ENCODE measurements at regions of chr16 and their contacts with region 1.

Region 1: GRCh38 chr16:58451945-58452401 is 48.0 kb upstream of the NDRG4 start:
- DNase-seq: no peak
- H3K4me3 ChIP-seq: no peak overlapping the region
- CTCF ChIP-seq: no peak

Region 2: GRCh38 chr16:58352690-58353089 is 99.3 kb before region 1 on chr16:
- in situ Hi-C with region 1: loop called (anchors 5 kb)
- DNase-seq: no peak
- H3K4me3 ChIP-seq: no peak overlapping the region
- CTCF ChIP-seq: no peak

Region 3: GRCh38 chr16:58399718-58400633 is 52.0 kb before region 1 on chr16:
- in situ Hi-C with region 1: loop called (anchors 5 kb)
- DNase-seq: no peak
- H3K4me3 ChIP-seq: no peak overlapping the region
- CTCF ChIP-seq: no peak

Region 4: DNA sequence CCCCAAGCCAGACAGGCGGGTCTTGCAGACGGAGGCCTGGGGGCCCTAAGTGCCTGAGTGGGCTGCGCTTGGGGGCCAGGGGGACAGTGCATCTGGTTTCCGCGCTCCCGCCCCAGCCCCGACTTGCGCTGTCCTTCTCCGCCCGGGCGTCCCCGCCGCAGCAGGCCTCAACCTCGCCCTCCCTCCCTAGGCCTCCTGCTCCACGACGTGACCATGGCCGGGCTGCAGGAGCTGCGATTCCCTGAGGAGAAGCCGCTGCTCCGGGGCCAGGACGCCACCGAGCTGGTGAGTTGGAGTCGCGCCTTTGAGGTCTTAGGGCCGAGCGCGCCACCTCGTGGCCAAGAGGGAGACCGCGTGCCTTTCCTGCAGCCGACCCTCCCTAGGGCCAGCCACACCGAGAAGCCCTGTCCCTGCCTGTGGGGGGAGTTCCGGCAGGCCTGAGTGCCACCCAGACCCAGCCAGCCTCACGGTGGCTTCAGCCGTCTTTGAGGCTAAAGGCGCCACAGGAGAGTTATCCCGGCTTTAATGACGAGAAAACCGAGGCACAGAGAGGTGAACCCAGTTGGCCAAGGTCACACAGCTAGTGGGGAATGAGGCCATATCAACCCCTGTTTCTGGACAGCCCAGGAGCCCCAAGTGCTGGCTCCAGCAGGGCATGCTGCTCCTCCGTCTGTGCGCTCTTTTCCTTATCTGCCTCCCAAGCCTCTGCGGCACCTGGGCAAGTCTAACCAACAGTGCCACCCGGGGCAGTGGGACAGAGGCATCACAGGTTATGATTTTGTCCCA is 35.8 kb after region 1 on chr16:
- in situ Hi-C with region 1: no loop called
- DNase-seq: peak; percentile 48
- H3K4me3 ChIP-seq: no peak overlapping the region
- CTCF ChIP-seq: peak; percentile 79

Region 5: DNA sequence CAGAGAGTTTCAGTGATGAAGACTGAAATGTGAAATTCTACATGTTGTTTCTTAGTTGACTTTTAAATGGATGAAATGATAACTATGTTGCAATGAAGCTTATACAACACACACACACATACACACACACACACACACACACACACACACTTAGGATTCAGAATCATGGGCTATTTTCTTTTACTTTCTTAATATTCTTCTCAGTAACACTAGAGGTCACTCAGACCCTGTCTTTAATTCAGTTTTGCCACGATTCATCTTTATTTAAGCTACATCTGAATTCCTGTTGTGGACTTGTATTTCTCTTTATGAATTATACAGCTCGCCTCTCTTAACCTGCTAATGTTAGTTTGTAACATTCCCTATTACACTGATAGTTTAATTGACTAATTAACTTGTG is 391.7 kb after region 1 on chr16:
- in situ Hi-C with region 1: no loop called
- DNase-seq: peak; percentile 38
- H3K4me3 ChIP-seq: no peak overlapping the region
- CTCF ChIP-seq: no peak

Measured in astrocyte of the cerebellum (primary cell).